Activated CD8-positive, alpha-beta T cell treated with anti-CD3 and anti-CD28 coated beads for 36 hours (primary cell): ENCODE measurements at regions of chr12 and their contacts with region 1.

Region 1: DNA sequence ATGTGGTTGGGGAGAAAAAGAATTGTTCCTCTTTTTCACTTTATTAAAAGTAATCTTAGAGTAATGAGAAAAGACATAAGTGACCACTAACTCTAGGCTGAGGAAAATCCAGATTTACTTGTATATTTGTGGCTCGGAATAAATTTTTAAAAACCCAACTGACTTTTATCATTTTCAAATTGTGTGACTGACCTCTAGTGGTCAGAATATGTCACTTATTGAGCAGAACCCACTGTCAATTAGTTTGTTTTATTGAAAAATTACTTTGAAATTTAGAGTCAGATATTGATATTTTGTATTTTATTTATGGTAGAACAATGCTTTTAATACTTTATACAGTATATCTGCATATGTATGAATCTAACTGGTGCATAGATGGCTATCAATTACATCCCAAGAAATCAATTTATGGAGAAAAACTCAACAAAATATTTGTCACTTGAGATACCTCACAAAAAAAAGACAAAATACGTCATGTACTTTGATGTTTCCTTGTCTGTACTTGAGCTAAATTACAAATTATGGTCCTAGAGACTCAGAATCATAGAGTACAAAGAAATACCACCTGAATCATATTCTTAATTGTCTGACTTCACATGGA is 229.4 kb downstream of the CNTN1 start:
- DNase-seq: no peak
- ATAC-seq: no peak
- H3K4me3 Mint-ChIP-seq: no peak overlapping the region
- H3K27ac Mint-ChIP-seq: no peak overlapping the region
- H3K4me1 Mint-ChIP-seq: no peaks in the 10 kb centered on the region
- H3K27me3 Mint-ChIP-seq: no peaks in the 10 kb centered on the region
- CTCF ChIP-seq: peak; percentile 77

Region 2: GRCh38 chr12:40152783-40153383 is 768.8 kb before region 1 on chr12:
- CTCF ChIA-PET with region 1: no interaction called
- POLR2A ChIA-PET with region 1: no interaction called
- intact Hi-C with region 1: loop called (anchors 10 kb)
- DNase-seq: peak; percentile 74
- ATAC-seq: peak; percentile 39
- H3K4me3 Mint-ChIP-seq: no peak overlapping the region
- H3K27ac Mint-ChIP-seq: no peak overlapping the region
- H3K4me1 Mint-ChIP-seq: no peaks in the 10 kb centered on the region
- H3K27me3 Mint-ChIP-seq: peaks cover 8% of the 10 kb centered on the region
- CTCF ChIP-seq: peak; percentile 89

Region 3: DNA sequence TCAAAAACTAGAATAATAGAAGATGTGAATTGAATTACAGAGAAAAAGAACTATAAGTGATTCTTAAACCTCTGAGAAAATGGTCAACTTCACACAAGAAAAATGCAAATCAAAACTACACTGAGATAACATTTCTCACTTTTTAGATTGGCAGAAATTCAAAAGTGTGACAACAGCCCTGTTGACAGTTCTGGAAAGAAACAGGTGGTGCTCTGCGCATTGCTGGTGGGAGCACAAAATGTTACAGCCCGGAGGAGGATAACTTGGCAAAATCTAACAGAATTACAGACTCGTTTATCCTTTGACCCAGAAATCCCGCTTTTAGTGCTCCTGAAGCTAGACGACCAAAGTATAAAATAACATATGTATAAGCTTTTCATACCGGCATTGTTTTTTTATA is 451.9 kb before region 1 on chr12:
- CTCF ChIA-PET with region 1: no interaction called
- POLR2A ChIA-PET with region 1: no interaction called
- intact Hi-C with region 1: no loop called
- DNase-seq: no peak
- ATAC-seq: no peak
- H3K4me3 Mint-ChIP-seq: no peak overlapping the region
- H3K27ac Mint-ChIP-seq: no peak overlapping the region
- H3K4me1 Mint-ChIP-seq: no peaks in the 10 kb centered on the region
- H3K27me3 Mint-ChIP-seq: no peaks in the 10 kb centered on the region
- CTCF ChIP-seq: no peak

Region 4: DNA sequence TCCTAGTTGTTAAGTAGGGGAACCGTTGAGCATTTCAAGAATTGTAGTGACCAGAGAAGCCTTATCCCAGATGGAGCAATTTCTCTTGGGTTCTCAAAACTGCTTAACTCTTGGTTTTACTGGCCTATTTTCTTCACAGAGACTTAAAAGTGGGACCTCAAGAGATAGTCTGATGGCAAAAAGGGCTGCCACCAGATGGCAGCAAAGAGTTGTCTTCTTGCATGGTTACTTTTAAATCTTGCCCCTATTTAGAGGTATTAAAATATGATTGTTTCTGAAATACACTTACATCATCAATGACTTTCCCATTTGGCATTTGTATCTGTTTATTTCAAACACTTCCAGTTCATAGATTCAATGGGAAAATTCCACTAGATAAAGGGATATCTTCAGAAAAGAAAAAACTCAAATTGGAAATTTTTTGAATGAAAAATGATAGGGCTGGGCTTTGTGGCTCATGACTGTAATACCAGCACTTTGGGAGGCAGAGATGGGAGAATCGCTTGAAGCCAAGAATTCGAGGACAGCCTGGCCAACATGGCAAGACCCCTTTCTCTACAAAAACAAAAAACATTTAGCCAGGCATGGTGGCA is 299.3 kb before region 1 on chr12:
- CTCF ChIA-PET with region 1: interaction called, 5 read pairs
- POLR2A ChIA-PET with region 1: no interaction called
- intact Hi-C with region 1: loop called (anchors 2 kb)
- DNase-seq: peak; percentile 68
- ATAC-seq: no peak
- H3K4me3 Mint-ChIP-seq: no peak overlapping the region
- H3K27ac Mint-ChIP-seq: no peak overlapping the region
- H3K4me1 Mint-ChIP-seq: no peaks in the 10 kb centered on the region
- H3K27me3 Mint-ChIP-seq: no peaks in the 10 kb centered on the region
- CTCF ChIP-seq: peak; percentile 65

Region 5: GRCh38 chr12:40843495-40843894 is 78.2 kb before region 1 on chr12:
- CTCF ChIA-PET with region 1: no interaction called
- POLR2A ChIA-PET with region 1: no interaction called
- intact Hi-C with region 1: no loop called
- DNase-seq: no peak
- ATAC-seq: no peak
- H3K4me3 Mint-ChIP-seq: no peak overlapping the region
- H3K27ac Mint-ChIP-seq: no peak overlapping the region
- H3K4me1 Mint-ChIP-seq: no peaks in the 10 kb centered on the region
- H3K27me3 Mint-ChIP-seq: no peaks in the 10 kb centered on the region
- CTCF ChIP-seq: no peak